Mammary epithelial cell (primary cell): ENCODE measurements at regions of chr4 and their contacts with region 1.

Region 1: GRCh38 chr4:112145326-112145819 is at the start of gene FAM241A:
- DNase-seq: peak; percentile 79
- H3K4me3 ChIP-seq: peak within 1 kb of the TSS; percentile 68 to 85 (median 70)
- H3K27ac ChIP-seq: peak within 1 kb of the TSS; percentile 69
- H3K4me1 ChIP-seq: peaks cover 8% of the 10 kb centered on the region
- H3K27me3 ChIP-seq: no peaks in the 10 kb centered on the region
- CTCF ChIP-seq: no peak
- total RNA-seq, gene FAM241A: 5.5 to 8.1 TPM

Region 2: GRCh38 chr4:111960241-111960667 is 185.1 kb before region 1 on chr4:
- CTCF ChIA-PET with region 1: no interaction called
- dilution Hi-C with region 1: no loop called
- in situ Hi-C with region 1: no loop called
- intact Hi-C with region 1: no loop called
- DNase-seq: peak; percentile 17
- H3K4me3 ChIP-seq: no peak overlapping the region
- H3K27ac ChIP-seq: no peak overlapping the region
- H3K4me1 ChIP-seq: peaks cover 14% of the 10 kb centered on the region
- H3K27me3 ChIP-seq: no peaks in the 10 kb centered on the region
- CTCF ChIP-seq: no peak

Region 3: DNA sequence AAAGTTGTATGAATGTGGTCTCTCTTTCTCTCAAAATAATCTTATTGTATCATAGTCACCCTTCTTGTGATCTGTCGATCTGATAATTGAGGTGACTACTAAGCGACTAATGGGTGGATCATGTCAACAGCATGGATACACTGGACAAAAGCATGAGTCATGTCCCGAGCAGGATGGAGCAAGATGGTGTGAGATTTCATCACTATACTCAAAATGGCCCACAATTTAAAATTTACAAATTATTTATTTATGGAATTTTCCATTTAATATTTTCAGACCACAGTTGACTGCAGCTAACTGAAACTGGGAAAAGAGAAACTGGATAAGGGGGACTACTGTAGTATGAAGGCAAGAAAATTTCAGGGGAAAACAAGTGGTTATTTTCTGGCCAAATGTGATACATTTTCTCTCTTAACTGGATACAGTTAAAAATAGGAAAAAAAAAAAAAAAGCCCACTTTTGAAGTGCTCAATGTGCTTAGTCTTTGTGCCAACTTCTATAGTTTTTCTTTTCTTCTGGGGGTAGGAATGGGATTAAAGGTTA is 25.1 kb after region 1 on chr4:
- CTCF ChIA-PET with region 1: no interaction called
- dilution Hi-C with region 1: no loop called
- in situ Hi-C with region 1: no loop called
- intact Hi-C with region 1: loop called (anchors 2 kb)
- DNase-seq: peak; percentile 87
- H3K4me3 ChIP-seq: no peak overlapping the region
- H3K27ac ChIP-seq: peak overlapping the region; percentile 98
- H3K4me1 ChIP-seq: peaks cover 59% of the 10 kb centered on the region
- H3K27me3 ChIP-seq: no peaks in the 10 kb centered on the region
- CTCF ChIP-seq: no peak

Region 4: DNA sequence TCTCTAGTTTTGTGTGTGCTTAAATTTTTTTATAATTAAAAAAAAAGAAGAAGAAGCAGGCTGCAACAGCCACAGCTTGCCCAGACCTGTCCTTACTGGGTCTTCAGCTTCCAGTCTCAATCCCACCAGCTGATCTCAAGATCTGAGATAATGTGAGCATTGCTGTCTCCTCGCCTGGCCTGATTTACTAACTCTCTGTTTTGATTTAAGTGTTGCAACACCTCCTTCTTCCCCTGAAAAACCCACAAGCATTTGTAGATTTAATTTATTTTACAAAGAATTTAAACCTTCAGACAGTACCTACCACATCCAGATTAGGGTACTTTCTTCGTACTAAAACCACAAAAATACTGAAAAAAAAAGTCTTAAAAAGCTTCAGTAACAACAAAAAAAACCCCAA is 37.9 kb after region 1 on chr4:
- CTCF ChIA-PET with region 1: no interaction called
- dilution Hi-C with region 1: no loop called
- in situ Hi-C with region 1: no loop called
- intact Hi-C with region 1: loop called (anchors 5 kb)
- DNase-seq: peak; percentile 69
- H3K4me3 ChIP-seq: no peak overlapping the region
- H3K27ac ChIP-seq: peak overlapping the region; percentile 49
- H3K4me1 ChIP-seq: peaks cover 11% of the 10 kb centered on the region
- H3K27me3 ChIP-seq: no peaks in the 10 kb centered on the region
- CTCF ChIP-seq: no peak

Region 5: GRCh38 chr4:112472318-112472717 is 326.9 kb after region 1 on chr4:
- CTCF ChIA-PET with region 1: no interaction called
- dilution Hi-C with region 1: no loop called
- in situ Hi-C with region 1: no loop called
- intact Hi-C with region 1: no loop called
- DNase-seq: no peak
- H3K4me3 ChIP-seq: no peak overlapping the region
- H3K27ac ChIP-seq: no peak overlapping the region
- H3K4me1 ChIP-seq: no peaks in the 10 kb centered on the region
- H3K27me3 ChIP-seq: peaks cover 2% of the 10 kb centered on the region
- CTCF ChIP-seq: no peak